Right lobe of liver (tissue), 6 donors: ENCODE measurements at regions of chr5 and their contacts with region 1.

Region 1: DNA sequence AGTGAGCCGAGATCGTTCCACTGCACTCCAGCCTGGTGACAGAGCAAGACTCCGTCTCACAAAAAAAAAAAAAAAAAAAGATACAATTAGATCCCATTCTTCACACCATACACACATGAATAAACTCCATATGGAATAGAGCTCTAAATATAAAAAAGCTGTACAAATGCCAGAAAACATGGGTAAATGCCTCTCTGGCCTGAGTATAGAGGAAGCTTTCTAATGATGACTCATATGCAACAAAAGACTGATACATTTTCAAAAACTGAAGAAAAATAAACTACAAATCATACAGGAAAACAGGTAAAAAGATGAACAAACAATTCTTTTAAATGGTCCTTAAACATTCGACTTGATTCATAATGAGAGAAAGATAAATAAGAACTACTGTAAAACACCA is 8.6 kb downstream of the ZFP62 start:
- DNase-seq: no peak
- ATAC-seq: no peak
- H3K4me3 ChIP-seq: no peak overlapping the region
- H3K27ac ChIP-seq: no peak overlapping the region
- H3K4me1 ChIP-seq: no peaks in the 10 kb centered on the region
- H3K27me3 ChIP-seq: no peaks in the 10 kb centered on the region
- CTCF ChIP-seq: no peak
- POLR2A ChIP-seq: no peak

Region 2: DNA sequence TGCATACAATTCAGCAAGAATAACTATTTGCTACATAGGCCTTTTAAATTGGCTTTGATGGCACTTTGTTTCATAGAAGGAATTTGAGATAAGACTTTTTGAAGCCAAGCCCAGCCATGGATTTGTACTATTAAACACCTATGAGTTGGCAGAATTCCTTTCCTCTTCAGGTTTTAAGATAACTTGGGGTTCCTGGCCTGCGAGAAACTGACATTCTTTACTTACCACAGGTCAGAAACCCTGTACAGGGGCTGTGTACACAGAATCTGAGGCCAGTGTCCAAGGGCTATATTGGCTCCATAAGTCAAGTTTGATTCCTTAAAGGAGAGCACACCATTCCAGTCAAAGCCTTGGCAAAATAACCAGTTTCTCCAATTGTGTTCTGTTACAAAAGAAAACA is 125.4 kb after region 1 on chr5:
- intact Hi-C with region 1: no loop called
- DNase-seq: no peak
- ATAC-seq: no peak
- H3K4me3 ChIP-seq: no peak overlapping the region
- H3K27ac ChIP-seq: no peak overlapping the region
- H3K4me1 ChIP-seq: no peaks in the 10 kb centered on the region
- H3K27me3 ChIP-seq: no peaks in the 10 kb centered on the region
- CTCF ChIP-seq: no peak
- POLR2A ChIP-seq: no peak

Region 3: GRCh38 chr5:181005791-181006190 is 153.3 kb after region 1 on chr5:
- intact Hi-C with region 1: no loop called
- DNase-seq: no peak
- ATAC-seq: peak in 1 of 4 donors; percentile 25
- H3K4me3 ChIP-seq: no peak overlapping the region
- H3K27ac ChIP-seq: no peak overlapping the region
- H3K4me1 ChIP-seq: no peaks in the 10 kb centered on the region
- H3K27me3 ChIP-seq: no peaks in the 10 kb centered on the region
- CTCF ChIP-seq: no peak
- POLR2A ChIP-seq: no peak

Region 4: DNA sequence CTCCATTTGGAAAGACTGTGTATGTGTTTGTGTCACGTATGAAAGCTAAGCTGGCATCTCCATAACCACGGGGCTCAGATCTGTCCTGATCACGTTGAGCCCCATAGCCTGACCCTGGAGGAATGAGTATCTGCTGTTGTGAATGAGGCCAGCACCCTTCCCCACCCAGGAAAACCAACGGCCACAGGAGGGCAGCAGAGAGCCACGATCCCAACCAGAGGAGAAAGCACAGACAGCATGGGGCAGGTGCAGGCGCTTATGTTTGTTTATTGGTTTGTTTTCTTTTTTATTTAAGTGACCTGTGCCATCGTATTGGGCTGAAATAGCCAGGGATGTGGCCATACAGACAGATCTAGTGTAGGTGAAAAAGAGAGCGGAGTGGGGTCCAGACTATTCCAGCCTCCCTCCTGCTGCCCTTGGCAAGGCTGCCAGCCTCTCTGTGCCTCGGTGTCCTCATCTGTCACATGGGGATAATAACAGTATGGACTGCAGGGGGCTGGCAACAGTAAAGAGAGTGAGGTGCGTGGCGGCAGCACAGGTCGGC is 306.9 kb after region 1 on chr5:
- intact Hi-C with region 1: loop called in 1 of 2 experiments (anchors 10 kb)
- DNase-seq: peak; percentile 81 to 87 (median 84)
- ATAC-seq: peak; percentile 96 to 99 (median 98)
- H3K4me3 ChIP-seq: no peak overlapping the region
- H3K27ac ChIP-seq: no peak overlapping the region
- H3K4me1 ChIP-seq: no peaks in the 10 kb centered on the region
- H3K27me3 ChIP-seq: no peaks in the 10 kb centered on the region
- CTCF ChIP-seq: peak; percentile 73 to 93 (median 89)
- POLR2A ChIP-seq: no peak